ENCODE measurements at regions of chr1 and their contacts with region 1.

Region 1: DNA sequence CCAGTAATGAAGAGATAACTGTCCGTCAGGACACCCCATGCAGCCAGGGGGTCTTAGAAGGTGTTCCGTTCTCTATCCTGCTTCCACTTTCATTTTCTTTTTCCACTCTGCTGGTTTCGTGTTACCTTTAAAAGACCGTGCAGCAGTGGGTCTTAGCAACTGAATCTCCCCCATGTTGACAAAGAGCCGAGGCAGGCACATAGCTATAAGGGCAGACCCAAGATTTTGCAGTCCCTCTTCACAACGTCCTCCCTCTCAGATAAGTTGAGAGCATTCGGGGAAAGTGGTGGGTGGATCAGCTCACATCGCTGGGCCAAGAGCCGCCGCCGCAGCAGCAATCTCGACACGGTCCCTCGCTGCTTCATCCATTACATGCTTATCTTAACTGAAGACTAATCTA is 355.5 kb downstream of the LMO4 start:
- DNase-seq: peak; percentile 57
- ATAC-seq: peak; percentile 56
- H3K4me3 ChIP-seq: peak overlapping the region; percentile 89
- H3K27ac ChIP-seq: peak overlapping the region; percentile 96
- H3K4me1 ChIP-seq: peaks cover 10% of the 10 kb centered on the region
- H3K27me3 ChIP-seq: no peaks in the 10 kb centered on the region
- CTCF ChIP-seq: no peak
- POLR2A ChIP-seq: no peak
- RAD21 ChIP-seq: no peak

Region 2: DNA sequence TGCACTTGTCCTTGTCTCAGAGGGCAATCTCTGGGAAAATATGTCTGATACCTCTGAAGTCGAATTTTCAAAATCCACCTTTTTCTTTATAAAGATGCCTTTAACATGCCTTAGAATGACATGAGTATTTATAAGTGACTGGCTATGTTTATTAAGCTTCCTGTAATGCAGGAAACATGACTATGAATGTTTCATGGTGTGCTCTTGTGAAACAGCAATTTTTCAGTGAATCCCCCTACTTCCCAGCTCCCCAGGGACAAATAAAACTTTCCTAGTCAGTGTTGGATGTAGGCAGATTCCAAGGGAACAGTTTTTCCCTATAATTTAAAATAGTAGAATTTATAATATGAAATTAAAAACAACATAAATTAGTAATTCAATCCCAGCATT is 81.5 kb after region 1 on chr1:
- CTCF ChIA-PET with region 1: no interaction called
- POLR2A ChIA-PET with region 1: no interaction called
- dilution Hi-C with region 1: no loop called
- in situ Hi-C with region 1: no loop called
- intact Hi-C with region 1: no loop called
- DNase-seq: peak; percentile 88
- ATAC-seq: peak; percentile 35
- H3K4me3 ChIP-seq: no peak overlapping the region
- H3K27ac ChIP-seq: peak overlapping the region; percentile 60
- H3K4me1 ChIP-seq: peaks cover 7% of the 10 kb centered on the region; the same call in 1 of the 2 replicates
- H3K27me3 ChIP-seq: no peaks in the 10 kb centered on the region
- CTCF ChIP-seq: no peak
- POLR2A ChIP-seq: no peak
- RAD21 ChIP-seq: no peak

Region 3: DNA sequence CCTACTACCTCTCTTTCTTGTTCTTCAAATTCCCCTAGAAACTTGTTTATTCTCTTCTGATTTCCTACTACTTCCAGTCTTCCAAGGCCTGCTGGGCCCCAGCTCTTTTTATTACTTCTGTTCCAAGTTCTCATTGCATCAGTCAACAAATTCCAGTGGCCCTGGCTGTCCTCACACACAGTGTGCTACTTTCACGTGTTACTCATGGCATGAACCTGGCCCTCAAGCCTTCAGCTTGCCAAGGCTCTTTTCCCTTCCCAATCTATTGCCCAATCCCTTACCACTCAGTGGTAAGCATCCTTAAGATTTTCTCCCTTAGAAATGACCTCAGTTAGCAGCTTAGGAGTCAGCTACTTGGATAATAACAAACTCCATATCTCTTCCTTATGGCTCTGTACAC is 258.0 kb after region 1 on chr1:
- CTCF ChIA-PET with region 1: no interaction called
- POLR2A ChIA-PET with region 1: no interaction called
- dilution Hi-C with region 1: no loop called
- in situ Hi-C with region 1: loop called (anchors 10 kb)
- intact Hi-C with region 1: no loop called
- DNase-seq: peak; percentile 35
- ATAC-seq: no peak
- H3K4me3 ChIP-seq: no peak overlapping the region
- H3K27ac ChIP-seq: no peak overlapping the region
- H3K4me1 ChIP-seq: no peaks in the 10 kb centered on the region
- H3K27me3 ChIP-seq: no peaks in the 10 kb centered on the region
- CTCF ChIP-seq: no peak
- POLR2A ChIP-seq: no peak
- RAD21 ChIP-seq: no peak

Region 4: GRCh38 chr1:88640060-88640459 is 955.9 kb after region 1 on chr1:
- CTCF ChIA-PET with region 1: no interaction called
- POLR2A ChIA-PET with region 1: no interaction called
- dilution Hi-C with region 1: no loop called
- in situ Hi-C with region 1: no loop called
- intact Hi-C with region 1: no loop called
- DNase-seq: no peak
- ATAC-seq: no peak
- H3K4me3 ChIP-seq: no peak overlapping the region
- H3K27ac ChIP-seq: no peak overlapping the region
- H3K4me1 ChIP-seq: no peaks in the 10 kb centered on the region
- H3K27me3 ChIP-seq: no peaks in the 10 kb centered on the region
- CTCF ChIP-seq: no peak
- POLR2A ChIP-seq: no peak
- RAD21 ChIP-seq: no peak